ENCODE measurements at regions of chr16 and their contacts with region 1.

Region 1: GRCh38 chr16:89720813-89721545 is at the starts of genes VPS9D1 and ZNF276:
- DNase-seq: peak; percentile 76
- H3K4me3 Mint-ChIP-seq: peak within 1 kb of the TSS; percentile 87
- H3K27ac Mint-ChIP-seq: peak within 1 kb of the TSS; percentile 79
- H3K4me1 Mint-ChIP-seq: peaks cover 33% of the 10 kb centered on the region
- H3K27me3 Mint-ChIP-seq: no peaks in the 10 kb centered on the region
- total RNA-seq, gene VPS9D1: 4.6 and 4.8 TPM in 2 replicates
- total RNA-seq, gene ZNF276: 34.4 and 35.5 TPM in 2 replicates

Region 2: DNA sequence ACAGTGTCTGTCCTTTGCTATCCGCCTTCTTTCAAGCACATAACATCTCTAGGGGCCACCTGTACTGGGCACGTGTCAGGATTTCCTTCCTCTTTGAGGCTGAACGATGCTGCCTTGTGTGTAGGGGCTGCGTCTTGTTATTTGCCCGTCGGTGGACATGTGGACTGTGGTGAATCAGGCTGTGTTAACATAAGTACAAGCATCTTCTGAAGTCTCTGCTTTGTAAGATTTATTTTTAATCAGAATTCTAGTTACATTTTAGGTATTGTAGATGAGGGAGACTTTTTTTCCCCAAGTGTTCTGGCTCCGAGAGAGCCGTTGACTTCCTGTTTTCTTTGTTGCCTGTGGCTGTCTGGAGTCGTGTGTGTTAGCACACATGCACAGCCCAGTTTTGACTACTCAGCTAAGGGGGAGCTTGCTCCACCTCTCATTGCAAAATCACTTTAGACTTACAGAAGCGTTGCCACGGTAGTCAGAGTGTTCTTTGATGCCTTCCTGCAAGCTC is 186.7 kb before region 1 on chr16:
- intact Hi-C with region 1: no loop called
- DNase-seq: no peak
- H3K4me3 Mint-ChIP-seq: no peak overlapping the region
- H3K27ac Mint-ChIP-seq: peak overlapping the region; percentile 34
- H3K4me1 Mint-ChIP-seq: peaks cover 14% of the 10 kb centered on the region
- H3K27me3 Mint-ChIP-seq: no peaks in the 10 kb centered on the region

Region 3: DNA sequence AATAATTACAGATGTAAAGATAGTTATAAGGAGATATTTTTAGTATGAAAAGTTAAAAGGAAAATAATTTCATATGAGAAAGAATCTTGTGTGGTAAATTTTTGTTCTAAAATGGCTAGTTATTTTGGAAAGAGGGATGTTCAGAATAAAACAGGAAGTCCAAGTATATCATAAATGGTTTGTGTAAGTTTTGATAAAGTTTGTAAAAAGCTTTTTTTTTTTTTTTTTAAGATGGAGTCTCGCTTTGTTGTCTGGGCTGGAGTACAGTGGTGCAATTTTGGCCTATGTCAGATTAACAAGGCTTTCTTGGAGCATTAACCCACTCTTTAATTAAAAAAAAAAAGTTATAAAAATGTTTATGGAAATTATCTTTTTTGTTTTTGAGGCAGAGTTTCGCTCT is 42.7 kb before region 1 on chr16:
- intact Hi-C with region 1: no loop called
- DNase-seq: no peak
- H3K4me3 Mint-ChIP-seq: no peak overlapping the region
- H3K27ac Mint-ChIP-seq: no peak overlapping the region
- H3K4me1 Mint-ChIP-seq: no peaks in the 10 kb centered on the region
- H3K27me3 Mint-ChIP-seq: no peaks in the 10 kb centered on the region

Region 4: DNA sequence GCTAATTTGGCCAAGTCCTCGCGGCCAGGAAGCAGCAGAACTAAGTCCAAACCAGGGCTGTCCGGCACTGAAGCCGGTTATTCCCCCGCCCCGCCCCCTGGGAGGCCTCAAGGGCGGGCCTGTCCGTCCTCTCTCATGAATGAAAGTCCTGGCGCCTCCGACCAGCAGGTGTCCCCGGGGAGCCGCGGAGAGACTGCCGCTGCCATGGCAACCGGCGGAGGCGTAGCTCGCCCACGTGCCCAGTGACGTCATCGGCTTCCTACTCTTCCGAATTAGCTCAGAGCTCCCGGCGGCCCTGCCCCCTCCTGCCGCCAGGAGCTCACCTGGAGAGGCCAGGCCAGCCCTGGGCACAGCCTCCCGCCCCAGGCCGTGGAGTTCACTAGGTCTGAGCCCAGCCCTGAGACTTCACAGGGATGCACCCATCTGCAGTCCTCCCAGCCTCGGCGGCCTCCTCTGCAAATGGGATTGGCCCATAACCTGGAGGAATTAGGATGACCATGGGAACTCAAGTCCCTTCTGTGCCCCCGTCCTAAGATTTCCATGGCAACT is 20.8 kb before region 1 on chr16:
- intact Hi-C with region 1: loop called (anchors 1 kb)
- DNase-seq: peak; percentile 95
- H3K4me3 Mint-ChIP-seq: peak overlapping the region; percentile 83
- H3K27ac Mint-ChIP-seq: peak overlapping the region; percentile 67
- H3K4me1 Mint-ChIP-seq: peaks cover 12% of the 10 kb centered on the region
- H3K27me3 Mint-ChIP-seq: no peaks in the 10 kb centered on the region

Region 5: GRCh38 chr16:89737341-89738071 is 16.5 kb after region 1 on chr16:
- intact Hi-C with region 1: loop called (anchors 2 kb)
- DNase-seq: peak; percentile 64
- H3K4me3 Mint-ChIP-seq: no peak overlapping the region
- H3K27ac Mint-ChIP-seq: peak overlapping the region; percentile 19
- H3K4me1 Mint-ChIP-seq: peaks cover 15% of the 10 kb centered on the region
- H3K27me3 Mint-ChIP-seq: no peaks in the 10 kb centered on the region

Region 6: GRCh38 chr16:89764711-89765201 is 43.8 kb after region 1 on chr16:
- intact Hi-C with region 1: loop called (anchors 5 kb)
- DNase-seq: peak; percentile 16
- H3K4me3 Mint-ChIP-seq: peak overlapping the region; percentile 61
- H3K27ac Mint-ChIP-seq: peak overlapping the region; percentile 67
- H3K4me1 Mint-ChIP-seq: peaks cover 28% of the 10 kb centered on the region
- H3K27me3 Mint-ChIP-seq: no peaks in the 10 kb centered on the region

Region 7: DNA sequence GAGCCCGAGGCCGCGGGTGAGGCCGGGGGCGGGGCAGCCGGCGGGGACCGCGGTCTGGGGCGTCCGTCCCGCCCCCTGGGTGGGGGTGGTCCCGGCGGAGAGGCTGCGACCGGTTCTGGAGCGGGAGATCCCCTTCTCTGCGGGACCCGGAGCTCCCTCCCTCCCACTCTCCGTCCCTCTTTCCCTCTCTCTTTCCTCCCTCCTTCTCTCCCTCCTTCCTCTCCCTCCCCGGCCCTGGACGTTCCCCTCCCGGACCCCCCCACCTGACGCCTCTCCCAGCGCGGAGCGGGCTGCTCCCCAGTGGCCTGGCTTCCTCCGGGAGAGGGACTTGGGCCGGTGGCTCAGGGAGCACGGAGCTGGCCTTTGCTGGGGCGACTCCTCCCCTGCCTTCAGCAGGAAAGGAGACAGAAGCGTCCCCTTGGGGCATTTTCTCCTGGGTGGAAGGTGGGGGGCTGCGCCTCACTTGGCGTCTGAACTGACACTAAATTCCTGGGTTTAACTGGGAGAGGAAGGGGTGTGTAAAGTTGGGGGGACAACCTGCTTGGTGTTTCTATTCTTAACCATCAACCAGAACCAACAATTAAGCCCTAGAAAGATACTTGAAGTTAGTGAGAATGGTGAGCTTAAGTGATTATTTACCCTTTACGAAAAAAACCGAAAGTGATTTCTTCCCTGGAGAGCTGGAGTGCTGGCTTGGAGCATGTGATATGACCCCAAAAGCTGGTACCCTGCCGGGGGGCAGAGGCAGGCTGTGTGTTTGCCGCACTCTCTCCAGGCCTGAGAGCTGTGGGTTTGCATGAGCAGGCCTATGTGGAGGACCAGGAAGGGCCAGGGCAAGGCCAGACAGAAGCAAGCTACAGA is 108.0 kb after region 1 on chr16:
- intact Hi-C with region 1: no loop called
- DNase-seq: no peak
- H3K4me3 Mint-ChIP-seq: peak overlapping the region; percentile 64
- H3K27ac Mint-ChIP-seq: no peak overlapping the region
- H3K4me1 Mint-ChIP-seq: peaks cover 2% of the 10 kb centered on the region
- H3K27me3 Mint-ChIP-seq: peaks cover 15% of the 10 kb centered on the region

Region 8: DNA sequence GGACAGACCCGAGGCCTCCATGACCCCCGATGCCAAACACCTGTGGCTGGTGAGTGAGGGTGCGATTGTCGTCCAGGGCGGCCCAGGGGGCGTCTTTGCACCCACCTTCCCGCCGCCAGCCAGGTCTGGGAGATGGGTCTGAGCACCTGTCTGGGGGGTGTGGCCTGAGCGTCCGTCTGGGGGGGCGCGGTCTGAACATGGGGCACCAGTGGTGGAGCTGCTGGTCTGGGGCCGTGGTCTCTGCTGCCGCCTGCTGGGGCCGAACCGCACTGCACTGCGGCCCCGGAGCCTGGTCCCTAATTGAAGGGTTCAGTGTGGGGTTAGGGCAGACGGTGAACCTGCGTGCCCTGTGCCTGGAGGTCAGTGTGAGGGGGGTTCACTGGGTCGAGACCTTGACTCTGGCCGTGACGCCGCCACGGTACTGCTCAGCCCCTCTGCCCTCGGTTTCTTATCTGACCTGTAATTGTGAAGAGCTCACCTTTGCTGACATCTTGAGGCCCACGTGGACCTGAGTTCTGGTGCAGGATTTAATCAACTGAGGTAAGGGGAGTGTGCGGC is 139.8 kb after region 1 on chr16:
- intact Hi-C with region 1: loop called (anchors 5 kb)
- DNase-seq: peak; percentile 75
- H3K4me3 Mint-ChIP-seq: no peak overlapping the region
- H3K27ac Mint-ChIP-seq: no peak overlapping the region
- H3K4me1 Mint-ChIP-seq: peaks cover 29% of the 10 kb centered on the region
- H3K27me3 Mint-ChIP-seq: no peaks in the 10 kb centered on the region

Region 9: GRCh38 chr16:90077226-90077756 is 356.3 kb after region 1 on chr16 and contains the start of gene PRDM7:
- intact Hi-C with region 1: loop called (anchors 5 kb)
- DNase-seq: peak; percentile 96
- H3K4me3 Mint-ChIP-seq: peak within 1 kb of the TSS; percentile 66
- H3K27ac Mint-ChIP-seq: peak within 1 kb of the TSS; percentile 48
- H3K4me1 Mint-ChIP-seq: peaks cover 28% of the 10 kb centered on the region
- H3K27me3 Mint-ChIP-seq: peaks cover 16% of the 10 kb centered on the region
- total RNA-seq, gene PRDM7: not detected in 2 replicates

Measured in activated T-helper 2 cell treated with anti-CD3 and anti-CD28 coated beads, Interferon-gamma antibody, Interleukin-2, Interleukin-4, amounts not matched to agents 10 μg/mL and 5 μg/mL and 100 μg/mL, durations not matched to agents 14 hours and 24 hours and 36 hours (primary cell).